Activated naive CD4-positive, alpha-beta T cell treated with anti-CD3 and anti-CD28 coated beads, Interleukin-2, amount 10 ng/mL, durations not matched to agents 7 days and 5 days (primary cell): ENCODE measurements at regions of chr5 and their contacts with region 1.

Region 1: DNA sequence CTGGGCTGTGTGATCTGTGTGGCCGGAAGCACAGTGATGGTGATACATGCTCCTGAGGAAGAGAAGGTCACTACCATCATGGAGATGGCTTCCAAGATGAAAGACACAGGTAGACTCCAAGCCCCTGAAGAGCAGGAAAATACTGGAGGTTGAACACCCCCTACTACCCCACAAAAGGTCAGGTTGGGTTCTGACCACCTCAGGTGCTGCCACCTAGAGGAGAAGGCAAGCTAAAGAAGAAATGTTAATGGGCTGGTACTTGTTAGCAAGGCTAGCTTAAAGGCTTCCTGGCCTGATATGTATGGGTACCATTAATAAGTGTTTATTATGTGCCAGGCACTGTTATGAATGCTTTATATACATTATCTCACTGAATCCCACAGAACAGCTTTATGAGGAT is 11.7 kb downstream of the NIPAL4 start:
- DNase-seq: no peak
- H3K4me3 Mint-ChIP-seq: no peak overlapping the region
- H3K27ac Mint-ChIP-seq: no peak overlapping the region
- H3K4me1 Mint-ChIP-seq: peaks cover 2% of the 10 kb centered on the region
- H3K27me3 Mint-ChIP-seq: no peaks in the 10 kb centered on the region

Region 2: DNA sequence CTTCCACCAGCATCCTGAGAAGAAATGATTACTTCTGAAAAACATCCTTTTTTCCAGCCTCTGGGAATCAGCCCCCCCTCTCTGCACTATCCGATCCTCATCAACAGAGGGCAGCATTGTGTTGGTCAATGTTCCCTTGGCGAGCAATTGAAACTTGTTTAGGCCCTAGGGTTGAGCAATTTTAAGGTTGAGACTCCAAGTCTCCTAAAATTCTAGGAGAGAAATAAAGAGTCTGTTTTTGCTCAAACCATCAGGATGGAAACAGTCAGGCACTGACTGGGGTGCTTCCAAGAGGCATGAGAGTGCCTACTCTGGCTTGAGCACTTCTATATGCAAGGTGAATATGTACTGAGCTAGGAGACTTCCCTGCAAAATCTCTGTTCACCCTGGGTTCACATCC is 218.2 kb before region 1 on chr5:
- CTCF ChIA-PET with region 1: no interaction called
- DNase-seq: no peak
- H3K4me3 Mint-ChIP-seq: peak overlapping the region; percentile 16
- H3K27ac Mint-ChIP-seq: peak overlapping the region; percentile 95
- H3K4me1 Mint-ChIP-seq: peaks cover 97% of the 10 kb centered on the region
- H3K27me3 Mint-ChIP-seq: no peaks in the 10 kb centered on the region

Region 3: DNA sequence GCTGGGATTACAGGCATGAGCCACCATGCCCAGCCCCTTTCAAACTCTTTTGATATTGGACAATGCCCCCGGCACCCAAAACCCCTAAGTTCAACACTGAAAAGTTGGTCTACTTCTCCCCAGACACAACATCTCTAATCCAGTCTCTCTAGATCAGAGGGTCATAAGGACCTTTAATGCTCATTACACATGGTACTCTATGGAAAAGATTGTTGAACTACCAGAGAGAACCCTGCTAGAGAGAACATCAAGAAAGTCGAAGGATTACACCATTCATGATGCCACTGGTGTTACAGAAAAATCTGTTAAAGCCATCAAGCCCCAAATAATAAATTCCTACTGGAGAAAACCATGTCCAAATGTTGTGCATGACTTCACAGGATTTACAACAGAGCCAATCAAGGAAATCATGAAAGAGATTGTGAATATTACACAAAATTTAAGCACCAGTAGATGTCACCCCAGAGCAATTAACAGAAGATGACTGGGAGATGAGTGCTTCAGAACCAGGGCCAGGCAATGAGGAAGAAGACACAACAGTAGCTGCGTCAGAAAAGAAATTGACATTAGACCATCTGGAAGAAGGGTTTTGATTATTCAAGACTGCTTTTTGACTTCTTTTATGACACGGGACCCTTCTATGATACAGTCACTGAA is 40.0 kb before region 1 on chr5:
- CTCF ChIA-PET with region 1: interaction called, 30 read pairs
- DNase-seq: peak; percentile 38
- H3K4me3 Mint-ChIP-seq: no peak overlapping the region
- H3K27ac Mint-ChIP-seq: no peak overlapping the region
- H3K4me1 Mint-ChIP-seq: peaks cover 9% of the 10 kb centered on the region
- H3K27me3 Mint-ChIP-seq: peaks cover 40% of the 10 kb centered on the region

Region 4: GRCh38 chr5:157459715-157460599 is 11.8 kb before region 1 on chr5 and contains the start of gene NIPAL4:
- CTCF ChIA-PET with region 1: interaction called, 13 read pairs
- DNase-seq: peak; percentile 47
- H3K4me3 Mint-ChIP-seq: peak within 1 kb of the TSS; percentile 60
- H3K27ac Mint-ChIP-seq: no peak within 1 kb of the TSS
- H3K4me1 Mint-ChIP-seq: peaks cover 30% of the 10 kb centered on the region
- H3K27me3 Mint-ChIP-seq: peaks cover 51% of the 10 kb centered on the region

Region 5: GRCh38 chr5:157535042-157535865 is 63.5 kb after region 1 on chr5:
- CTCF ChIA-PET with region 1: no interaction called
- DNase-seq: no peak
- H3K4me3 Mint-ChIP-seq: no peak overlapping the region
- H3K27ac Mint-ChIP-seq: no peak overlapping the region
- H3K4me1 Mint-ChIP-seq: peaks cover 49% of the 10 kb centered on the region
- H3K27me3 Mint-ChIP-seq: no peaks in the 10 kb centered on the region